BJ (cell line): ENCODE measurements at regions of chr15 and their contacts with region 1.

Region 1: DNA sequence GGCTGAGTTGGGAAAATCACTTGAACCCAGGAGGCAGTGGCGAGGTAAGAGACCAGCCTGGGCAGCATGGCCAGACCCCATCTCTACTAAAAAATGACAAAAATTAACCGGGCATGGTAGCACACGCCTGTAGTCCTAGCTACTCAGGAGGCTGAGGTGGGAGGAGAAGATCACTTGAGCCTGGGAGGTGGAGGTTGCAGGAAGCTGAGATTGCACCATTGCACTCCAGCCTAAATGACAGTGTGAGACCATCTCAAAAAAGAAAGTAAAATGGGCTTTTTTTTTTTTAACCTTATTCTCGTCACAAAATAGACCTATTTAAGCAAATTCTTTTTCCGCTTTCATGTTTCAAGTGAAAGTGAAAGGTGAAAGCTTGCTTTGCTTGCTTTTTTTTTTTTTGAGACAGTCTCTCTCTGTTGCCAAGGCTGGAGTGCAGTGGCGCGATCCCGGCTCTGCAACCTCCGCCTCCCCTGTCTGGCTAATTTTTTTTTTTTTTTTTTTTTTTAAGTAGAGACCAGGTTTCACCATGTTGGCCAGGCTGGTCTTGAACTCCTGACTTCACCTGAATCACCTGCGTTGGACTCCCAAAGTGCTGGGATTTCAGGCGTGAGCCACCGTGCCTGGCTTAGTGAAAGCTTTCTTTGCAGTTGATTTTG is 3.6 kb downstream of the PDIA3 start:
- DNase-seq: no peak
- H3K4me3 ChIP-seq: no peak overlapping the region
- H3K27me3 ChIP-seq: no peaks in the 10 kb centered on the region
- CTCF ChIP-seq: no peak

Region 2: DNA sequence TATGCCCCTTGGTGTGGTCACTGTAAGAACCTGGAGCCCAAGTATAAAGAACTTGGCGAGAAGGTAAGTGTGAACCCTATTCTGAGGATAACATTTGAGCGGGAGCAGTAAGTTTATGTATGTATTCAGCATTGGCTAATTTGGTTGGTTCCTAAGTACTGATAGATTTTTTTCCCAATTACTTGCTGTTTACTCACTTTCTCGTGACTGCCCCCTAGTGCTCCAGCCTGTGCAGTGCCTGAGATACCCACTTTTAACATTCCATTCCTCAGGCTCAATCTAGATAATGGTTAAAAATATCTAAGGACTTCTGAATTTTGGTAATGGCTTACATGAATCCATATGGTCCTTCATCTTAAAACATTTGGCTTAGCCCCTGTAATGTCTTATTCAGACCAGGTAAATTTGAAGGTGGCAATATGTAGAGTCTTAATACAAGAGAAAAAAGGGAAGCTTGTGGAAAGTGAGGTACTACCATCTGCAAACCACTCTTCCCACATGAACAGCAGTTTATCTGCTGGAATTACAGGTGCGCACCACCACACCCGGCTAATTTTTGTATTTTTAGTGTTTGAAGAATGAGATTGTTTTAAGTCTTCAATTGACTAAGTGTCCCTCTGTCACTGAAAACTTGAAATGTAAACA is 19.9 kb after region 1 on chr15:
- CTCF ChIA-PET with region 1: interaction called, 10 read pairs
- POLR2A ChIA-PET with region 1: interaction called, 12 read pairs
- DNase-seq: peak; percentile 24
- H3K4me3 ChIP-seq: no peak overlapping the region
- H3K27me3 ChIP-seq: no peaks in the 10 kb centered on the region
- CTCF ChIP-seq: peak; percentile 90